Heart left ventricle (tissue), 16 donors: ENCODE measurements at regions of chr16 and their contacts with region 1.

Region 1: DNA sequence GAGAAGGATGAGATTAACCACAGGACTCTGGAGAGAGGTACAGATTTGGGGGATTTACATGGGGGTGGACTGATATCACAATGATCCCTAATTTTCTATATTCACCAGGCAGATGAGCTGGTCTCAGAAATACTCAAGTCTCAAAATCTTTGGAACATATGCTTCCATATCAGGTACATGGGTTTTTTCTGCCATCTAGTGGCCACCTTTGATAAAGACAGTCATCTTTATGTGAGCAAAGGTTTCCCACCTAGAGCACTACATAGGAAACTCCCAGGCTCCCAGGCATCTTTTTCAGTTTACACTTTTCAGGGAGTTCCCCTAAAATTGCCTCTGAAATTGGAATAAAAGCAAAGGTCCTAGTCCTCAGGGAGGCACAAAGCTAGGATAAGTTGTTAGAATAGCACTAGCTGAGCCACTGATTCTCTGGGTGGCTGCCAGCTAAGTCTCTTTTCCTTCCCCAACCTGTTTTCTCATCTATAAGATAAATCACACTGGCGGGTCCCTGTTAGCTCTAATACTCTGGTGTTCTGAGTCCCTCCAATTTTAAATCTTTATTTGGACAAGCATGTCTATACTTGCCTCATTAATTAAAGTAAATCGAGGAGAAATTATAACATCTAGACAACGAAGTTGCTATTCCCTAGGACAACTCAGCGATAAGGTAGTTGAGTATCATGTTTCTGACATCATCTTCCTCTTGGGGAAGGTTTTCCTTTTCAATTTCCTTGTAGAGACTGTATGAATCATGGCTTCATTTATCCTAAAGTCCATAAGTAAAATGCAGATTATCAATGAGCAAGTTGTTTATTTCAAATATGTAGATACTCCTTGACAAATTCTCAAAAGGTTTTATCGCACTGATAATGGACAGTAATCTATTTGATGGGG is 19.0 kb upstream of the MON1B start:
- DNase-seq: no peak
- ATAC-seq: peak in 3 of 4 donors; percentile 62 to 67 (median 63)
- H3K4me3 ChIP-seq: no peak overlapping the region
- H3K27ac ChIP-seq: no peak overlapping the region
- H3K4me1 ChIP-seq: no peaks in the 10 kb centered on the region
- H3K27me3 ChIP-seq: peaks cover 0 to 10% (median 0%) of the 10 kb centered on the region in 9 donors
- CTCF ChIP-seq: peak; percentile 66 to 85 (median 74)
- POLR2A ChIP-seq: no peak

Region 2: GRCh38 chr16:75789237-75789636 is 1382.8 kb before region 1 on chr16:
- intact Hi-C with region 1: loop called in 9 of 10 experiments (anchors 1 to 5 kb)
- DNase-seq: no peak
- ATAC-seq: peak in 2 of 4 donors; percentile 39 to 47
- H3K4me3 ChIP-seq: no peak overlapping the region
- H3K27ac ChIP-seq: no peak overlapping the region
- H3K4me1 ChIP-seq: no peaks in the 10 kb centered on the region
- H3K27me3 ChIP-seq: peaks cover 0 to 19% (median 5%) of the 10 kb centered on the region in 9 donors
- CTCF ChIP-seq: peak; percentile 70 to 89 (median 83)
- POLR2A ChIP-seq: no peak

Region 3: GRCh38 chr16:76278980-76279379 is 893.0 kb before region 1 on chr16:
- intact Hi-C with region 1: loop called in 4 of 10 experiments (anchors 5 to 10 kb)
- DNase-seq: no peak
- ATAC-seq: no peak
- H3K4me3 ChIP-seq: no peak overlapping the region
- H3K27ac ChIP-seq: no peak overlapping the region
- H3K4me1 ChIP-seq: no peaks in the 10 kb centered on the region
- H3K27me3 ChIP-seq: peaks cover 0 to 9% (median 0%) of the 10 kb centered on the region in 9 donors
- CTCF ChIP-seq: peak in 7 of 12 donors; percentile 14 to 32 (median 23)
- POLR2A ChIP-seq: no peak

Region 4: DNA sequence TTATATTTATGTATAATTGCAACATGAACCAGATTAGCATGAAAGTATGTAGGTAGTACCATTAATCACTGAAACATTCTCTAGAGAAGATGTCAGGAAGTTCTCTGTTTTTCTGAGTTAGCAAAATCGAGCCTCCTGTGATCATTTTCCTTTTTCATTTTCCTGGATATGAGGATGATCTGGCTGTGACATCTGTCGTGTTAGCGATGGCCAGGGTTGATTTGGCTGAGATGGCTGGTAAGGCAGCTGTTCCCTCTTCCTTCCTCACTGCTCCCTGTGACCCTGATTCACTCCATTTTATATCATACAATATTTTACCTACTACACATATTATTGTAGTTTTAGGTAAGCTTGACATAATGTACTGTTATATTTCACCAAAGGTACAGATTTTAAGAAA is 884.5 kb before region 1 on chr16:
- intact Hi-C with region 1: loop called in 1 of 10 experiments (anchors 10 kb)
- DNase-seq: no peak
- ATAC-seq: no peak
- H3K4me3 ChIP-seq: no peak overlapping the region
- H3K27ac ChIP-seq: no peak overlapping the region
- H3K4me1 ChIP-seq: no peaks in the 10 kb centered on the region
- H3K27me3 ChIP-seq: no peaks in the 10 kb centered on the region
- CTCF ChIP-seq: no peak
- POLR2A ChIP-seq: no peak

Region 5: DNA sequence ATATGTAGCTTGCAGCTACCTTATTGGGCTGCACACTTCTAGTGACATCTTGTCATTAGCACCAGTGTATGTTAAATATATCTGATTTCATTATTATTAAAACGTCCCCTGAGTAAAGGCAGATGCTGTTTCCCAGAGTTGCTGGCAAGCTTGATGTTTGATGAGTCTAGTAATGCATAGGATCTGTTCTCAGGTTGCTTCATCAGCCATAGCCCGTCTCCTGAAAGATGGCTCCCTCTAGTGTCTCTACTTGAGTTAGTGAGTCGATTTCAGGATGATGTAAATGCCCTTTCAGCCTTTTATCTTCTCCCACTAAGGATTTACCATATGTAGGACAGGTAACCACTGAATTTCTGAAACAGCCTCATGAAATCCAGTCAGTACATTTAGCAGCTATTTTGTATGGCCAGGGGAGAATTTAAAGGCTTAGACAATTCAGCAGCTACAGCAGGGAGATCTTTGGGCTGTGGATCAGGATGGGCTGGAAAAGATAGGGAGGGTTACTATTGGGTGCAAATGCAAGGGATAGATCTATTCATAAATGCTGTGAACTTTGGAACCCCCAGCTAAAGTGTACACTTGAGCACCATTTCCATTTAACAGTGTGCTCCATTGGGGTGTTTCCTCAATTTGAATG is 518.5 kb before region 1 on chr16:
- intact Hi-C with region 1: loop called in 3 of 10 experiments (anchors 10 kb)
- DNase-seq: no peak
- ATAC-seq: no peak
- H3K4me3 ChIP-seq: no peak overlapping the region
- H3K27ac ChIP-seq: no peak overlapping the region
- H3K4me1 ChIP-seq: no peaks in the 10 kb centered on the region
- H3K27me3 ChIP-seq: peaks cover 0 to 5% (median 0%) of the 10 kb centered on the region in 9 donors
- CTCF ChIP-seq: peak in 9 of 12 donors; percentile 28 to 52 (median 33)
- POLR2A ChIP-seq: no peak

Region 6: GRCh38 chr16:76668207-76668725 is 503.7 kb before region 1 on chr16:
- intact Hi-C with region 1: loop called in 1 of 10 experiments (anchors 10 kb)
- DNase-seq: peak in 1 of 5 donors; percentile 25
- ATAC-seq: no peak
- H3K4me3 ChIP-seq: no peak overlapping the region
- H3K27ac ChIP-seq: no peak overlapping the region
- H3K4me1 ChIP-seq: no peaks in the 10 kb centered on the region
- H3K27me3 ChIP-seq: no peaks in the 10 kb centered on the region
- CTCF ChIP-seq: no peak
- POLR2A ChIP-seq: no peak

Region 7: GRCh38 chr16:77062878-77063671 is 108.9 kb before region 1 on chr16:
- intact Hi-C with region 1: loop called in 2 of 10 experiments (anchors 5 to 10 kb)
- DNase-seq: no peak
- ATAC-seq: peak in 2 of 4 donors; percentile 47 to 61
- H3K4me3 ChIP-seq: peak overlapping the region in 1 of 12 donors; percentile 7
- H3K27ac ChIP-seq: peak overlapping the region in 1 of 12 donors; percentile 9
- H3K4me1 ChIP-seq: peaks cover 0 to 36% (median 16%) of the 10 kb centered on the region in 12 donors
- H3K27me3 ChIP-seq: no peaks in the 10 kb centered on the region
- CTCF ChIP-seq: peak in 1 of 12 donors; percentile 7
- POLR2A ChIP-seq: no peak